Activated B cell treated with CpG ODN at 0.5 μM for 24 hours (primary cell): ENCODE measurements at regions of chr13 and their contacts with region 1.

Region 1: DNA sequence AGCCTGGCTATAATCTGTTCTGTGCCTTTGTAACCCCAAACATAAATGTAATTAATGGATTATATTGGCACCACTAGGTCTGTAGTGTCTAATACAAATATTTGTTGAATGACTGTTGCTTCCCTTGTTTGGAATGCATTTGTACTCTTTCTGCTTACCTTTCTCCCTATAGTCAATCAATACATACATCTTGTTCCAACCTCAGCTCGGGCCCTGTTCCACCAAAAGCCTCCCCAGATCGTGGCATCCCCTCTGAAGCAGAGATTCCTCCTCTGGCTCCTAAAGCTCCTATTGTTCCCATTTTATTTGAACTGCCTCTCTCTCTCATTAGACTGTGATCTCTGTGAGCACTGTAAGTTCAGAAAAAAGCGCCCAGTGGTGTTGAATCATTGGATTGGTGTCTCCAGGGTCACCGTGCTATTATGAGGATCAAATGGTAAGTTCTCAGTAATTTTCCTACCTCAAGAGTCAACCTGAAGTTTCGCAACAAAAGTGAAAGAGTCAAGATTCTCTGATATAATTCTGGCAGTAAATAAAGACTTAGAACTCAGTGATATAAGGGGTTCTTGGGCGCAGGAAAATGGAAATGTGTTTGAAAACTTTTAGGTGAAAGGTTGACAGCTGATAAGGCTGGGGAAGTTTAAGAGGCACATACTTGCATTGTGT is 151.5 kb downstream of the KLF5 start:
- DNase-seq: no peak
- ATAC-seq: no peak
- H3K4me3 Mint-ChIP-seq: no peak overlapping the region
- H3K27ac Mint-ChIP-seq: no peak overlapping the region
- H3K4me1 Mint-ChIP-seq: no peaks in the 10 kb centered on the region
- H3K27me3 Mint-ChIP-seq: no peaks in the 10 kb centered on the region
- CTCF ChIP-seq: no peak

Region 2: DNA sequence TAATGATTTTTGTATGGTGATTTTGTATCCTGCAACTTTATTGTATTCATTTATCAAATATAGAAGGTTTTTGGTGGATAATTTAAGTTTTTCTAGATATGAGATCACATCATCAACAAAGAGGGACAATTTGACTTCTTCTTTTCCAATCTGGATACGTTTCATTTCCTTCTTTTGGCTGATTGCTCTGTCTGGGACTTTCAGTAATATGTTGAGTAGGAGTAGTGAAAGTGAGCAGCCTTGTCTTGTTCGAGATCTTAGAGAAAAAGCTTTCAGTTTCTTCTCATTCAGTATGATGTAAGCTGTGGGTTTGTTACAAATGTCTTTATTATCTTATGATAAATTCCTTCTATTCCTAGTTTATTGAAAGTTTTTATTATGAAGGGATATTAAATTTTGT is 991.4 kb before region 1 on chr13:
- CTCF ChIA-PET with region 1: no interaction called
- POLR2A ChIA-PET with region 1: no interaction called
- intact Hi-C with region 1: loop called (anchors 5 kb)
- DNase-seq: no peak
- ATAC-seq: no peak
- H3K4me3 Mint-ChIP-seq: no peak overlapping the region
- H3K27ac Mint-ChIP-seq: no peak overlapping the region
- H3K4me1 Mint-ChIP-seq: no peaks in the 10 kb centered on the region
- H3K27me3 Mint-ChIP-seq: no peaks in the 10 kb centered on the region
- CTCF ChIP-seq: no peak